Naive thymus-derived CD4-positive, alpha-beta T cell (primary cell): ENCODE measurements at regions of chr7 and their contacts with region 1.

Region 1: DNA sequence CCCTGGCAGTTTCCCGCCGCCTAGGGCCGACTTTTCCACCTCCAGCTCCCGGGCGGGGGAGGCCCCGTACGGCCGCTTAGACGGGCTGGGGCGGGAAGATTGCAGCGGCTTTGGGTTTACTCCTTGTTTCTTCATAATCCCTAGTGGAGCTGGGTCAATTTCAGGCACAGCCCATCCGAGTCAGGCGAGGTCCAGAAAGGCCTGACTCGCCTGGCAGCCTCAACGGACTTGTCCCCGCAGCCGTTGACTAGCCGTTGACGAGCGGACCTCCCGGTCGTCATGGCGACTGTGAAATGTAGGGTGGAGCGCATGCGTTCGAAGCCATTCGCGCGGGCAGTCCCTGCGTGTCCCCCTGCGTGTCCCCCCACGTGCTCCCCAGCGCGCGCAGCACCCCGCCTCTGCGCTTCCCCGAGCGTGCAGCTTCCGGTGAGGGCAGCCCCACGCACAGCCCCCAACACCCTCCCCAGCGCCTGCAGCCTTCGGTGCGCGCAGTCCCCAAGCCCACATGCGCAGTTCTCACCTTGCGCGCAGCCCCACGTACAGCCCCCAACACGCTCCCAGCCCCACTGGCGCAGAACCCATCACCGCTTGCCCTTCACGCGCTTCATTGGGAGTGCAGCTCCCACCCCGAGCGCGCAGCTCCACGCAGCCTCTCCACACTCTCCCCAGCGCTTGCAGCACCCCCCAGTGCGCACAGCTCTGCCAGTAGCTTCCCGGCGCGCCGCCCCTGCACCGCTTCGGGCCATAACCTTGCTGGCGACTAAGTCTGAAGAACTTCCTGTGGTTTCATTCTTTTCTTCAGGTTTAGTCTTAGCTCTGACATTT is 67.8 kb downstream of the TBX20 start:
- DNase-seq: peak in 1 of 9 donors; percentile 23
- ATAC-seq: no peak
- H3K4me3 ChIP-seq: no peak overlapping the region
- H3K4me3 Mint-ChIP-seq: peak overlapping the region in 9 of 10 donors; percentile 13 to 84 (median 59)
- H3K27ac ChIP-seq: no peak overlapping the region
- H3K27ac Mint-ChIP-seq: no peak overlapping the region
- H3K4me1 ChIP-seq: no peaks in the 10 kb centered on the region
- H3K4me1 Mint-ChIP-seq: peaks cover 5 to 19% (median 6%) of the 10 kb centered on the region in 7 donors
- H3K27me3 ChIP-seq: no peaks in the 10 kb centered on the region
- H3K27me3 Mint-ChIP-seq: peaks cover 21 to 48% (median 30%) of the 10 kb centered on the region in 5 donors

Region 2: DNA sequence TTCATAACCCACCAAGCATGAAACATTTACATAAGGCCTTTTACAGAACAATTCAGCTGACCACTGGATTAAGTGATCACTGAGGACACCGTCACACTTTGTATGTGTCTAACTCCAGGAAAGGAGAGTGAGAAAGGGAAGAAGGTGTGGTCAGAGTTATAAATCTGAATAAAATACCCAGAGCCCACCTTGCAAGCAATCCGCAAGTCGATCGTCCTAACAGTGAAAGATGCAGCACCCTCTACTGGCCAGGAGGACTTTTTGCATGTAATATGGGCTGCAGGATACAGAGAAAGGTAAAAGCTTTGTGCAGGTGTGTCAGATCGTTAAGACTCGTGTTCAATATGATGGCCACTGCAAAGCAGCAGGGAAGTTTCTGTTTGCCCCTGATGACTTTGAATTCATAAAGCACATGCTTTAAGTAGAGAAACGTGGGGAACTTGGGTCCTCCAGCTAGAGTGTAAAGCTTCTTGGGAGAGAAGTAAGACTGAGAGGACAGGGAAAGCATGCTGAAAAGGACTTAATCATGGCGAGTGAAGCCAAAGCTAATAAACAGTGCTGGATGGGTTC is 1349.2 kb before region 1 on chr7:
- CTCF ChIA-PET with region 1: no interaction called
- POLR2A ChIA-PET with region 1: no interaction called
- intact Hi-C with region 1: no loop called
- DNase-seq: no peak
- ATAC-seq: no peak
- H3K4me3 ChIP-seq: no peak overlapping the region
- H3K4me3 Mint-ChIP-seq: no peak overlapping the region
- H3K27ac ChIP-seq: no peak overlapping the region
- H3K27ac Mint-ChIP-seq: no peak overlapping the region
- H3K4me1 ChIP-seq: no peaks in the 10 kb centered on the region
- H3K4me1 Mint-ChIP-seq: no peaks in the 10 kb centered on the region
- H3K27me3 ChIP-seq: no peaks in the 10 kb centered on the region
- H3K27me3 Mint-ChIP-seq: peaks cover 0 to 7% (median 6%) of the 10 kb centered on the region in 5 donors

Region 3: DNA sequence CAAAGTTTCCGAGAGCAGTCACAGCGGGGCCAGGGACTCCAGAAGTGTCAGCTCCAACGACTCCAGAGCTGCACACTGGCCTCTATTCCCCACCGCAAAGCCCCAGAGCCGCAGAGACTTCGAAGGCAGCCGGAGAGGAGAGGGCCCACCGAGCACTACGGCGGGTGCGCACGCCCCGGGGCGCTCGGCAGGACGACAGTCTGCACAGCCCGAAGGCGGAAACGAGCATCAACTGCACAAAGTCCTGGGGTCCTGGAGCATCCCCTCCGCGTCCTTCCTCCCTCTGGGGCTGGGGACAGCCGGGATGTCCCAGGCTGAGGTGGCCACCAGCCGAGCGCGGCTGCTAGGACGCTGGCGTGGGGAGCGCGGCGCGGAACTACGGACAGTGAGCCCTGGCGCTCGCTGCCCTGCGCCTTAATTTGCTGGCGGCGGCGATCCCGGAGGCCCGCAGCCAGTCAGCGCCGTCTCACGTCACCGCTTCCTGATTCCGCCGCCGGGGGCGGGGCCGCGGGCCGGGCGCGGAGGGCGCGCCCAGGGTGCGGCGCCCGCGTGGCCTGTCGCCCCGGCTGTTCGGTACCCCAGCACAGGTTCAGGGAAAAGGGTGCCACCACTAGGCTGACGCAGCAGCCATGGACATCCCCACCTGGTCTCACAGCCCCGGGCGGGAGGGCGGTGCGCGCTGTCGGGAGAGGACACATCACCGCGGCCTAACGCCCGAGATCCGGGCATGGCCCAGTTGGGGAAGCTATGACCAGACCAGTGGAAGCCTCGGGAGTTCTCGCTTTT is 67.8 kb after region 1 on chr7 and contains the start of gene TBX20:
- CTCF ChIA-PET with region 1: no interaction called
- POLR2A ChIA-PET with region 1: no interaction called
- intact Hi-C with region 1: loop called in 1 of 2 experiments (anchors 5 kb)
- DNase-seq: peak in 1 of 9 donors; percentile 44
- ATAC-seq: peak; percentile 42
- H3K4me3 ChIP-seq: peak within 1 kb of the TSS; percentile 6
- H3K4me3 Mint-ChIP-seq: peak within 1 kb of the TSS in 9 of 10 donors; percentile 45 to 74 (median 52)
- H3K27ac ChIP-seq: no peak within 1 kb of the TSS
- H3K27ac Mint-ChIP-seq: peak within 1 kb of the TSS in 1 of 9 donors; percentile 66
- H3K4me1 ChIP-seq: no peaks in the 10 kb centered on the region
- H3K4me1 Mint-ChIP-seq: peaks cover 0 to 22% (median 15%) of the 10 kb centered on the region in 7 donors
- H3K27me3 ChIP-seq: peaks cover 13 to 35% of the 10 kb centered on the region in 2 donors
- H3K27me3 Mint-ChIP-seq: peaks cover 80 to 90% (median 83%) of the 10 kb centered on the region in 5 donors
- total RNA-seq, gene TBX20: not detected

Region 4: GRCh38 chr7:35519971-35520809 is 334.1 kb after region 1 on chr7:
- CTCF ChIA-PET with region 1: no interaction called
- POLR2A ChIA-PET with region 1: no interaction called
- intact Hi-C with region 1: loop called in 1 of 2 experiments (anchors 5 kb)
- DNase-seq: peak in 6 of 9 donors; percentile 38 to 47 (median 40)
- ATAC-seq: peak; percentile 79
- H3K4me3 ChIP-seq: no peak overlapping the region
- H3K4me3 Mint-ChIP-seq: no peak overlapping the region
- H3K27ac ChIP-seq: no peak overlapping the region
- H3K27ac Mint-ChIP-seq: no peak overlapping the region
- H3K4me1 ChIP-seq: no peaks in the 10 kb centered on the region
- H3K4me1 Mint-ChIP-seq: peaks cover 0 to 6% (median 4%) of the 10 kb centered on the region in 7 donors
- H3K27me3 ChIP-seq: no peaks in the 10 kb centered on the region
- H3K27me3 Mint-ChIP-seq: peaks cover 0 to 33% (median 17%) of the 10 kb centered on the region in 5 donors

Region 5: GRCh38 chr7:35537067-35538023 is 351.2 kb after region 1 on chr7:
- CTCF ChIA-PET with region 1: no interaction called
- POLR2A ChIA-PET with region 1: no interaction called
- intact Hi-C with region 1: loop called in 1 of 2 experiments (anchors 2 kb)
- DNase-seq: peak; percentile 51 to 82 (median 75)
- ATAC-seq: peak; percentile 98
- H3K4me3 ChIP-seq: peak overlapping the region; percentile 46
- H3K4me3 Mint-ChIP-seq: peak overlapping the region; percentile 66 to 87 (median 80)
- H3K27ac ChIP-seq: no peak overlapping the region
- H3K27ac Mint-ChIP-seq: no peak overlapping the region
- H3K4me1 ChIP-seq: no peaks in the 10 kb centered on the region
- H3K4me1 Mint-ChIP-seq: peaks cover 0 to 4% (median 0%) of the 10 kb centered on the region in 7 donors
- H3K27me3 ChIP-seq: no peaks in the 10 kb centered on the region
- H3K27me3 Mint-ChIP-seq: peaks cover 0 to 24% (median 15%) of the 10 kb centered on the region in 5 donors